Endothelial cell of umbilical vein (primary cell): ENCODE measurements at regions of chr14 and their contacts with region 1.

Region 1: DNA sequence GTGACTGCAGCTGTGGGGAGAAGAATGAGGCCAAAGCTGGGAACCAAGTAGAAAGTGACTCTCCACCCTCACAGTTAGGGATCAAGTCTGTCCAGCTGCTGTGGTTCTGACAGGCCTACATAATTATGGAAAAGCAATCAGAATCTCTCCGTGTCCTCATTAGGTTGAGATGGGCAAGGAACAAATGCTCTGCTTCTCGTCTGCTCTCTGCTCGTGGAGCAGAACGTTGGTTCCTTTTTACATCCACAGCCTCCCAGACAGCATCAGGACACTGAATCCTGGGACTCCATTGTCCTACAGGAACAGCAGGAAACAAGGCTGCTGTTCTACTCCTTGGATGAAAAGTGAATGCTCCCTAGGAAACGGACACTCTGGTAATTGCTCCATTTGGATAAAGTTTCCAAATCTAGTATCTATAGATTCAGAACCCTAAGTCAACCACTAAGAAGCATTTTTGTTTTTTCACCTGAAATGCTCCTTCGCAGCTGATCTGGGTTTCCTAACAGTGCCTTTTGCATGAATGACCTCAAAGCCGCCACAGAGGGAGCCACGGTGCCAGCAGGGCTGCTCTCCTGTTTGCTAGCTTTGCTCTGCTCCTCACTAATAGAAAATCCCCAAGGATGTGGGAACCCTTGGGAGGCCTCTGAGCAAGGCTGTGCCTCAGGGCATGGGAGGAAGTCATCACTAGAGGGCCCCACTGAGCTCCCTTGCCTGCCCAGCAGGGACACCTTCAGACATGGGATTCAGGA is 102.0 kb downstream of the EGLN3 start:
- DNase-seq: peak; percentile 48
- H3K4me3 ChIP-seq: no peak overlapping the region
- H3K27ac ChIP-seq: no peak overlapping the region
- H3K4me1 ChIP-seq: no peaks in the 10 kb centered on the region
- H3K27me3 ChIP-seq: no peaks in the 10 kb centered on the region
- CTCF ChIP-seq: peak; percentile 63 to 82
- POLR2A ChIP-seq: no peak

Region 2: GRCh38 chr14:33810308-33810707 is 38.6 kb before region 1 on chr14:
- CTCF ChIA-PET with region 1: no interaction called
- POLR2A ChIA-PET with region 1: no interaction called
- dilution Hi-C with region 1: no loop called
- intact Hi-C with region 1: no loop called
- DNase-seq: no peak
- H3K4me3 ChIP-seq: no peak overlapping the region
- H3K27ac ChIP-seq: no peak overlapping the region
- H3K4me1 ChIP-seq: no peaks in the 10 kb centered on the region
- H3K27me3 ChIP-seq: peaks cover 2 to 13% of the 10 kb centered on the region in 2 experiments
- CTCF ChIP-seq: no peak
- POLR2A ChIP-seq: no peak

Region 3: DNA sequence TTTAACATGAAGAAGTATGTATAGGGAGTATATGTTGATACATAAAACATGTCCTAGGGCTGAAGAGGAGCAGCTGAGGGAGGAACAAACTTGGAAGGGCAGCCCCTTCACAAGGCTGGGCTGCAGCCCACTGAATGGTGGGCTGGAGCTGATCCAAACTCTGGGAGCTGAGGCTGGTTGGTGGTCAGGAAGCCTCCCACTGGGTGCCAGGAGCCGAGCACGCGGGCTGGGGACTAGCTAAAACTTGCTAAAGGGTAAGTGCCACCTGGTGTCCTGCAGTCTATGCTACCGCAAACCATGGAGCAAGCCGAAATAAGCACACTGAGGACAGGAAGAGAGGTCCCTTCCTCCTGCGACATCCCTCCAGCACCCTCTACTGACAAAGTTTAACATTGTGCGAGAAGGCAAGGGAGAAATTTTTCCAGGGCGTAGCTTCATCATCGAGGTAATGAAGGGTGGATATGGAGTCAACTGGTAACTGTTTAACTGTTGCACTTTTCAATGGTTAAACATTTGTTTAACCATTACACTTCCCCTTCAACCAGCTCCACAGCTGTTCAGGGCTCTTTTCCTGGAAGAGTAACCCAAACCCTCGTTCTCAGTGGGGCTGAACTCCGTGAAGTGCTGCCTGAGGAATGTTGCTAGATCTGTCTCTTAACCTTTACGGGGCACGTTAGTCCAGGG is 59.8 kb after region 1 on chr14:
- CTCF ChIA-PET with region 1: interaction called, 15 read pairs
- POLR2A ChIA-PET with region 1: no interaction called
- dilution Hi-C with region 1: no loop called
- intact Hi-C with region 1: no loop called
- DNase-seq: no peak
- H3K4me3 ChIP-seq: no peak overlapping the region
- H3K27ac ChIP-seq: no peak overlapping the region
- H3K4me1 ChIP-seq: no peaks in the 10 kb centered on the region
- H3K27me3 ChIP-seq: peaks cover 0 to 3% of the 10 kb centered on the region in 2 experiments
- CTCF ChIP-seq: no peak
- POLR2A ChIP-seq: no peak

Region 4: DNA sequence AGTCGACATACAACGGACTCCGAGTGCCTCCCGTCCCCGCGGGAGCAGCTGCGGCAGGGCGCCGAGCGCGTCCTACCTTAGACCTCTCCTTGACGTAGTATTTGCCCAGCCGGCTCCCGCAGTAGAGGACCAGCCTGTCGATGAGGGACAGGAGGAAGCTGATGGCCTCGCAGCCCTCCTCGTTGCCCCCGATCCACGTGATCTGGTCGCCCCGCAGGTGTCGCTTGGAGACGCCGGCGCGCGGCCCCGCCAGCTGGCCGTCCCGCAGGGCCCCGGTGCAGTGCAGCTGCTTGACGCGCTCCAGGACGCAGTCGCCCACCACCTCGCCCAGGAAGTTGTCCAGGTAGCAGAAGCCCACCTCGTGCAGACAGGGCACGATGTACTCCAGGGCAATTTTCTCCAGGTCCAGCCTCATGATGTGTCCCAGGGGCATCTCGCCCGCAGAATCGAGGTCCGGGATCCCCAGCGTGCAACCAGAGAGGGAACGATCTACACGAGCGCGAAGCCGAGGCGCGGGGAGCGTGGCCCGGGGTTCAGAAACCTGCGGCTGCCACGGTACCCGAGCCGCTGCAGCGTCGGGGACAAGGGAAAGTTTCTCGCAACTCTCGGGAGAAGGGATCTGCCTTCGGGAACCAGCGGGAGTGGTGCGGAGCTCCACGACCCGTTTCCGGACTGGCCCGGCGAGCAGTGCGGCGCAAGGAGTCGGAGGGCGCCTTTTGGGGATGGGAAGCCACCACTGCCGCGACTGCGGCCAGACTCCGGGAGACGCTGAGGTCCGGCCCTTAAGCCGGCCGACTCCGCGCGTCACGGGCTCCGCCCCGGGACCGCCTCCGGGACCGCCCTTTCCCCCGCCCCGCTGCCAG is 101.7 kb after region 1 on chr14 and contains the start of gene EGLN3:
- CTCF ChIA-PET with region 1: interaction called, 7 read pairs
- POLR2A ChIA-PET with region 1: no interaction called
- dilution Hi-C with region 1: no loop called
- intact Hi-C with region 1: loop called (anchors 1 kb)
- DNase-seq: peak; percentile 78
- H3K4me3 ChIP-seq: peak within 1 kb of the TSS; percentile 12 to 51 (median 49)
- H3K27ac ChIP-seq: no peak within 1 kb of the TSS
- H3K4me1 ChIP-seq: peaks cover 10% of the 10 kb centered on the region
- H3K27me3 ChIP-seq: peaks cover 38 to 56% of the 10 kb centered on the region in 2 experiments
- CTCF ChIP-seq: no peak
- POLR2A ChIP-seq: peak; percentile 29
- total RNA-seq, gene EGLN3: 0.14 and 0.20 TPM in 2 replicates

Region 5: DNA sequence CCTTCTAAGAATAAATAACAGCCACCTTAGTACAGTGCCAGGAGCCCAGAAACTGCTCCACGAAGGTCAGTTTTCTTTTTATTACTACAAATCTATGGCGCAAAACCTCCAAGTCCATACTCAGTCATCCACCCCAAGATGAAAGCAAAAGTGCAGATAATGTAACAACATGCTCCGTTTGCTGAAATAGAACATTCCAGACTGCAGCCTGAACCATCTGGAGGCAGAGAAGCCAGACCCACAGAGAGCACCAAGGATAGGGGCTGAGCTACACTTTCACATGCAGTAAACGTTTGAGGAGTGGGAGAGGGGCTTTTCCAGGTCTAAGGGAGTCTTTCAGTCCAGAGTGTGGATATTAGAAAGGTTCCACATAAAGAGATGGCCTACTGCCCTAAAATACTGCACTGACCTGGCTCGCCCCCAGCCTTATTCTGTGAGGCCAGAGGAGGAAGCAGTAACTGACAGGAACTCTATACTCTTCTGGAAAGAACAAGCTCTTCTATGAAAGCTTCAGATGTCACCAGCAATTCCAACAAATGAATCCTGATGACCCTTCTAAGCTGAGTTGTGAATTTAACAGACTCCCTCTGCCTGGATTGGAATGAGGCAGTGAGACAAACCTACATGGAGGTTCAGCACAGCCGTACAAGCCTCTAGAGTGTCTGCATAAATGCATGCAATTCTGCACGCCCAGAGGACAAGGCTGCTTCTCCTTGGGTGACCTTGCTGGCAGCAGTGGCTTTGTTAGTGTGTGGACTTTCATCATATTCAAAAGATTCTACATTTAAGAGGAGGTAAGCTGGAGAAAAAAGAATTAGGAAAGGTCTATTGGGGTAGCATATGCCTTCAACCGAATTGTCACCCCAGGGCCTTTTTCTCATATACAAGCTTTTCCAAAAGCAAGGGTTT is 255.9 kb after region 1 on chr14:
- CTCF ChIA-PET with region 1: interaction called, 244 read pairs
- POLR2A ChIA-PET with region 1: no interaction called
- dilution Hi-C with region 1: no loop called
- intact Hi-C with region 1: no loop called
- DNase-seq: no peak
- H3K4me3 ChIP-seq: no peak overlapping the region
- H3K27ac ChIP-seq: no peak overlapping the region
- H3K4me1 ChIP-seq: no peaks in the 10 kb centered on the region
- H3K27me3 ChIP-seq: peaks cover 0 to 3% of the 10 kb centered on the region in 2 experiments
- CTCF ChIP-seq: no peak
- POLR2A ChIP-seq: no peak

Region 6: GRCh38 chr14:34220921-34221320 is 372.0 kb after region 1 on chr14:
- CTCF ChIA-PET with region 1: interaction called, 16 read pairs
- POLR2A ChIA-PET with region 1: no interaction called
- dilution Hi-C with region 1: no loop called
- intact Hi-C with region 1: no loop called
- DNase-seq: no peak
- H3K4me3 ChIP-seq: no peak overlapping the region
- H3K27ac ChIP-seq: no peak overlapping the region
- H3K4me1 ChIP-seq: no peaks in the 10 kb centered on the region
- H3K27me3 ChIP-seq: peaks cover 2 to 3% of the 10 kb centered on the region in 2 experiments
- CTCF ChIP-seq: no peak
- POLR2A ChIP-seq: no peak

Region 7: GRCh38 chr14:34227834-34228649 is 379.2 kb after region 1 on chr14:
- CTCF ChIA-PET with region 1: interaction called, 24 read pairs
- POLR2A ChIA-PET with region 1: no interaction called
- dilution Hi-C with region 1: no loop called
- intact Hi-C with region 1: loop called (anchors 1 kb)
- DNase-seq: peak; percentile 50
- H3K4me3 ChIP-seq: no peak overlapping the region
- H3K27ac ChIP-seq: no peak overlapping the region
- H3K4me1 ChIP-seq: no peaks in the 10 kb centered on the region
- H3K27me3 ChIP-seq: peaks cover 3 to 4% of the 10 kb centered on the region in 2 experiments
- CTCF ChIP-seq: peak; percentile 74 to 83
- POLR2A ChIP-seq: no peak

Region 8: DNA sequence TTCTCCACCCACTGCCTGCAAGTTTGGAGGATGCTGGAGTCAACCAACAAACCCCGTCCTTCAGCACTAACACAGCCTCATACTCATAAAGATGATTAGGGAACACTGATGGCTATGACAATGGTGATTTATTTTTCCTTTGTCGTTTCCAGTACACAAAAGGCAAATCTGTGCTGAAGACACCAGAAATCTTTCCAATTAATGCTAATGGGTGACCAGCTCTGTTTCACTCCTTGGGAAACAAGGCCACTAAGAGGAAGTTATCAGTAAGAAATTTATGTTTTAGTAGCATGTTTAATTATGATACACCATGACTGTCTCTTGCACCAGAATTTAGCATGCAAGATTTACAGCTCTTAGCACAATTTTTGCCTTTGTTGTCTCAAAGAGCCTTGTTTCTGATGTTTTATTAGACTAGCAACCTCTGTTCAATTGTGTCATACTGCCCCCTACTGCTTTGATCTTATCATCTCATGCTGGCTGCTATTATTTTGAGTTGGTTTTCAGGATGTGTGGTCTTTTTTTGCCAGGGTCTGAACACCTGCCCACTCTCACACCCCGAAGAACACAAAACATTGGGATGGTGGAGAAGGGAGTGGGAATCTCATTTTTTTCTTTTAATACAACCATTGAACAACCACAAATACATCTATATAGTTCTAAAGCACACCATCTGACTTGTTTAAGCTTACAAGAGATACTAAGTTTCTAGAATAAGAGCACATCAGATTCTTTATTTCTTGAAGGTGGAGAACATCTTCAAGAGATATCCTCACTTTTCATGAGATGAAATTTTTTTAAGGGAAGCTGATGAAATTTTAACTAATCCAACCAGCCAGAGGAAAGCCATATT is 452.2 kb after region 1 on chr14:
- CTCF ChIA-PET with region 1: interaction called, 19 read pairs
- POLR2A ChIA-PET with region 1: no interaction called
- dilution Hi-C with region 1: no loop called
- intact Hi-C with region 1: no loop called
- DNase-seq: peak; percentile 49
- H3K4me3 ChIP-seq: no peak overlapping the region
- H3K27ac ChIP-seq: no peak overlapping the region
- H3K4me1 ChIP-seq: no peaks in the 10 kb centered on the region
- H3K27me3 ChIP-seq: peaks cover 0 to 2% of the 10 kb centered on the region in 2 experiments
- CTCF ChIP-seq: peak; percentile 43 to 45
- POLR2A ChIP-seq: no peak

Region 9: DNA sequence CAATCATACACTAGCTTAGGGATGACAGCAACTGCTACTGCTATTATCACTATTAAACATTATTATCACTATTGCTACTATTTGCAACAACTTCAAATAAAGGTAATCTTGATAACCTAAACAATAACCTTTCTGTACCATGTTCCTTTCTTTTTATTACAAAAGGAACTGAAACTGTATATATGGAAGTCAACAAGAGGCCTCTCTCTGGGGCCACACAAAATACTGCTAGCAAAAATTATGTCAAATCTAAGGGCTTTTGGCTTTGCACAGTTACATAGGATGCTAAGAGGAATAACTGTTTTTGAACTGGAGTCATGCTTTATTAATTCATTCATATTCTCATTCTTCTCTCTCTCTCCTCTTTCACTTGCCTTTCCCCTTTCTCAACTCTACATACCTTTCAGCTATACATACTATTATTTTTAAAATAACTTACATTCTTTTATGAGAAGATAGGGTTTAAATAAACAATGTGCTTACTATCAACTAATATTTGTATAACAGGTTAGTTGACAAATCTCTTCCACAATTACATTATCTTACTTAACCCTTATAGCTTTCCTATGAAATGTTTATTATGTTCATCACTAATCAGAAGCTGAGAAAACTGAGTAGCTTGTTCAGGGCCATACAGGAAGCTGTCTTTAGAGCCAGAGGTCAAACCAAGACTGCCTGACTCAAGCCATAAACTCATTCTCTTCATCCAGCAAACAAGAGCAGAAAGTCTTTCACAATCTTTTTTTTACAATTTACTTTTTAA is 587.4 kb after region 1 on chr14:
- CTCF ChIA-PET with region 1: no interaction called
- POLR2A ChIA-PET with region 1: no interaction called
- dilution Hi-C with region 1: no loop called
- intact Hi-C with region 1: no loop called
- DNase-seq: peak; percentile 37
- H3K4me3 ChIP-seq: no peak overlapping the region
- H3K27ac ChIP-seq: no peak overlapping the region
- H3K4me1 ChIP-seq: peaks cover 14% of the 10 kb centered on the region
- H3K27me3 ChIP-seq: no peaks in the 10 kb centered on the region
- CTCF ChIP-seq: no peak
- POLR2A ChIP-seq: no peak